ENCODE measurements at regions of chr12 and their contacts with region 1.

Region 1: GRCh38 chr12:105382771-105383622 is 52.5 kb downstream of the C12orf75 start:
- DNase-seq: peak; percentile 82
- H3K4me3 ChIP-seq: peak overlapping the region; percentile 28
- H3K27ac ChIP-seq: no peak overlapping the region
- H3K4me1 ChIP-seq: peaks cover 4% of the 10 kb centered on the region
- H3K27me3 ChIP-seq: no peaks in the 10 kb centered on the region
- CTCF ChIP-seq: peak; percentile 83

Region 2: GRCh38 chr12:105235732-105236476 is 147.1 kb before region 1 on chr12 and contains the start of gene APPL2:
- CTCF ChIA-PET with region 1: no interaction called
- POLR2A ChIA-PET with region 1: no interaction called
- intact Hi-C with region 1: loop called (anchors 5 kb)
- DNase-seq: peak; percentile 91
- H3K4me3 ChIP-seq: peak within 1 kb of the TSS; percentile 94
- H3K27ac ChIP-seq: peak within 1 kb of the TSS; percentile 82
- H3K4me1 ChIP-seq: peaks cover 6% of the 10 kb centered on the region
- H3K27me3 ChIP-seq: no peaks in the 10 kb centered on the region
- CTCF ChIP-seq: no peak; the same call in 1 of the 2 replicates
- total RNA-seq, gene APPL2: 26.7 and 33.7 TPM in 2 replicates

Region 3: DNA sequence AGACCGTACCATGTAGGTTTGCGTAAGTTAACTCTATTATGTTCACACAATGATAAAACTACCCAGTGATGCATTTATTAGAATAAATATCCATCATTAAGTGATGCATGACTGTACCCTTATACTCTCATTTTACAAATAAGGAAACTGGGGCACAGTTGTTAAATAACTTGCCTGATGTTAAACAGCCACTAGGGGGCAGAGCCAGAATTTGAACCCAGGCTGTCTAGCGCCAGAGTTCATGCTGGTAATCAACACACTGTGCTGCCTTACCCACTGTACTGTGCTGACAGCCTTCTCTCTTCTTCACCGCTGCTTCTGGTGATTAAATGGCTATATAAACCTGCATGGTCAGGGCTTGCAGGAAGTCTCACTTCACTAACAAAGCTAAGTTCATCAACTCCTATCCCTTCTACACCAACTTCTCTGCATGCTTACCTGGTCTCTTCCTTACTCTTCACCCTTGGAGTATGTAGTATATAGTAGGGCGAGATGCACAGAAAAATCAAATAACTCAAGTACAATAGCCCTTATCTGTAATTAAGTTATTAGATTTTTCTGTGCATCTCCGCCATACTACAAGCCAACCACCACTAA is 103.4 kb before region 1 on chr12:
- CTCF ChIA-PET with region 1: no interaction called
- POLR2A ChIA-PET with region 1: no interaction called
- intact Hi-C with region 1: loop called (anchors 1 kb)
- DNase-seq: peak; percentile 62
- H3K4me3 ChIP-seq: no peak overlapping the region
- H3K27ac ChIP-seq: no peak overlapping the region
- H3K4me1 ChIP-seq: no peaks in the 10 kb centered on the region
- H3K27me3 ChIP-seq: peaks cover 2% of the 10 kb centered on the region
- CTCF ChIP-seq: peak; percentile 82

Region 4: DNA sequence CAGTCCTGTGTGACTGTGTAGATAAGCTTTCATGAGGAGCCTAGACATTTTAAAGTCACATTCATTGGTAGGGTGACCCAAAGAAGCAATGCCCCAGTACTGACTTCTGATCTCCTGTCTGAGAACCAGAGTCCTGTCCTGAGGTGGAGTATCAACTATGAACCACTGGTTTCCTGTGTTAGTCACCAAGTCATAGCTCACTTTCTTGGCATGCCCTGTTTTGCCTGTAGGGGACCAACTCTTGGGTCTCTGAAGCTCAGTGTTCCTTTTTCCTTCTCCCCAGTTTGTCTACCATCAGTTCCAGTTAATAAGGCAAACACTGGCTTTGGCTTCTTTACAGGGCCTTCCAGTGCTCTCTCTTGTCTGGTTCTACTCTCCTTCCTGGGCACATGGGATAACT is 44.9 kb after region 1 on chr12:
- CTCF ChIA-PET with region 1: no interaction called
- POLR2A ChIA-PET with region 1: no interaction called
- intact Hi-C with region 1: no loop called
- DNase-seq: no peak
- H3K4me3 ChIP-seq: no peak overlapping the region
- H3K27ac ChIP-seq: no peak overlapping the region
- H3K4me1 ChIP-seq: no peaks in the 10 kb centered on the region
- H3K27me3 ChIP-seq: no peaks in the 10 kb centered on the region
- CTCF ChIP-seq: no peak

Region 5: GRCh38 chr12:106084014-106084671 is 701.1 kb after region 1 on chr12:
- CTCF ChIA-PET with region 1: no interaction called
- POLR2A ChIA-PET with region 1: no interaction called
- intact Hi-C with region 1: no loop called
- DNase-seq: peak; percentile 83
- H3K4me3 ChIP-seq: no peak overlapping the region
- H3K27ac ChIP-seq: no peak overlapping the region
- H3K4me1 ChIP-seq: peaks cover 3% of the 10 kb centered on the region
- H3K27me3 ChIP-seq: no peaks in the 10 kb centered on the region
- CTCF ChIP-seq: no peak